WTC11 (cell line): ENCODE measurements at regions of chr7 and their contacts with region 1.

Region 1: DNA sequence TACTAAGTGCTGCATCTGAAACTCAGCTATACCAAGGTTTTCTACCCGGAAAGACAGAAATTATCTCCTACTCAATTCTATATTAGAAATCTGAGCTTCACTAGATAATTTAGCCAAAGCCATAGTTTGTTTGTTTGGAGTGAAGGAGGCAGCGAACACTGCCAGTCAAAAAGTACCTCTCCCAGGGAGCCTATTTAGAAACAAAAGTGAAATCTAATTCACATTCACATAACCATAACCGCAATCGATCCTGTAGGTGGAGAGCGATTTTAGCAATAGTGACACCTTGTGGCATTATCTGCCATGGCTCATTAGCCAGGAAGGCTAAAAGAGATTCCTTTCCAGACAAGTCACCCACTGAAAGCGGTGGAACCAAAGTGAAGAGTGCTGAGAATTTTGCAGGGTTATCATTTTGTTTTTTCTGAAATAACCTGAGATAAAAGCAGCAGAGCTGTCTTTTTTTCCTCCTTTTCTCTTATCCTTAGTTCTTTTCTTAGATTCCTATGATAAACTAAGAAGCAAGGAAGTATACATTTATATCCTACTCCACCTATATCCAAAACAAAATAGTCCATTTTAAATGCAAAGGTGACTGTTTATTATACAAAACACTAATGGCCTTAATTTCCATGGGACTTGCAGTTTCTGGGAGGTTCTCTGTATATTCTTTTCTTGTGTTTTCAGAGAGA is 83.7 kb upstream of the BET1 start:
- DNase-seq: peak; percentile 51
- ATAC-seq: peak; percentile 91
- H3K4me3 Mint-ChIP-seq: peak overlapping the region; percentile 38
- H3K27ac Mint-ChIP-seq: no peak overlapping the region
- H3K4me1 Mint-ChIP-seq: peaks cover 21% of the 10 kb centered on the region
- H3K27me3 Mint-ChIP-seq: peaks cover 2% of the 10 kb centered on the region; the same call in 1 of the 2 replicates
- CTCF ChIP-seq: no peak; the same call in 1 of the 2 replicates

Region 2: GRCh38 chr7:93902777-93903423 is 184.9 kb before region 1 on chr7:
- CTCF ChIA-PET with region 1: interaction called, 17 read pairs
- POLR2A ChIA-PET with region 1: interaction called, 3 read pairs
- DNase-seq: no peak
- ATAC-seq: peak; percentile 94
- H3K4me3 Mint-ChIP-seq: no peak overlapping the region
- H3K27ac Mint-ChIP-seq: no peak overlapping the region
- H3K4me1 Mint-ChIP-seq: peaks cover 5% of the 10 kb centered on the region
- H3K27me3 Mint-ChIP-seq: no peaks in the 10 kb centered on the region
- CTCF ChIP-seq: peak; percentile 80

Region 3: DNA sequence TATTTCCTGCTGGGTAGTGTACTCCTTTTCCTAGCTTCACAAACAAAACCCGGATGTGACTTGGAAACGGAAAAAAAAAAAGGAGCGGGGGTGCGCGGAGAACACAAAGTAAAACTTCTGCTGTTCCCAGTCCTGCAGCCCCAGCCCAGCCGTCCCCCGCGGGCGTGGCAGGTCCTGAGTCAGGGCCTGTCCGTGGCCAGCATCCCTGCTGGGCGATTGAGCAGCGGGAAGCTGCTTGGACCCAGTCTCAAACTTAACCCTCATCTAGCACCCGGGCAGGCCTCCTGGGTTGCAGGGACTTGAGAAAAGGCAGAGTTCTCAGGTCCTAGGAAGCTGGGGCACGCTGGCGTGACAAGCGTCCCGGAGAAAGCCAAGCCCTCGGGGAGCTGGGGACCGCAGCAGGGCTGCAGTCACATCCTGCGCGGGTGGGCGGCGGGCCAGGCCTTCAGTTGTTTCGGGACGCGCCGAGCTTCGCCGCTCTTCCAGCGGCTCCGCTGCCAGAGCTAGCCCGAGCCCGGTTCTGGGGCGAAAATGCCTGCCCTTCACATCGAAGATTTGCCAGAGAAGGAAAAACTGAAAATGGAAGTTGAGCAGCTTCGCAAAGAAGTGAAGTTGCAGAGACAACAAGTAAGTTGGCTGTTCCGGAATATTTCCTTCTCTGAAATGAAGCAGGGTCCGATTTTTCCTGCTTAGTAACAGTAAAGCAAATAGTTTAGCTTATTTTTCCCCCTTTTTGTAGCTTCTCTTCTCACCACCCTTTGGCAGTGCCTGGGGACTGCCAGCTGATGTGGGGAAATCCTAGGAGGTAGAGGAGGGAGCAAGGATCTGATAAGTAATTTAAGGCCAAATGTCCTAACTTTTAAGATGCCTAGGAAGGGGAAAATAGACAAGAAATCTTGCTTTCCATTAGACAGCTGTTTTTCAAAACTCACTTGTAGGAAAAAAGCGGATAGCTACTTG is 165.9 kb before region 1 on chr7 and contains the start of gene GNG11:
- CTCF ChIA-PET with region 1: interaction called, 15 read pairs
- POLR2A ChIA-PET with region 1: no interaction called
- DNase-seq: peak; percentile 59
- ATAC-seq: peak; percentile 92
- H3K4me3 Mint-ChIP-seq: peak within 1 kb of the TSS; percentile 67
- H3K27ac Mint-ChIP-seq: no peak within 1 kb of the TSS; the same call in 1 of the 2 replicates
- H3K4me1 Mint-ChIP-seq: peaks cover 23% of the 10 kb centered on the region
- H3K27me3 Mint-ChIP-seq: no peaks in the 10 kb centered on the region
- CTCF ChIP-seq: no peak
- total RNA-seq, gene GNG11: 1.3 to 1.7 TPM (median 1.4 TPM) in 3 replicates